ENCODE measurements at regions of chr7 and their contacts with region 1.

Region 1: DNA sequence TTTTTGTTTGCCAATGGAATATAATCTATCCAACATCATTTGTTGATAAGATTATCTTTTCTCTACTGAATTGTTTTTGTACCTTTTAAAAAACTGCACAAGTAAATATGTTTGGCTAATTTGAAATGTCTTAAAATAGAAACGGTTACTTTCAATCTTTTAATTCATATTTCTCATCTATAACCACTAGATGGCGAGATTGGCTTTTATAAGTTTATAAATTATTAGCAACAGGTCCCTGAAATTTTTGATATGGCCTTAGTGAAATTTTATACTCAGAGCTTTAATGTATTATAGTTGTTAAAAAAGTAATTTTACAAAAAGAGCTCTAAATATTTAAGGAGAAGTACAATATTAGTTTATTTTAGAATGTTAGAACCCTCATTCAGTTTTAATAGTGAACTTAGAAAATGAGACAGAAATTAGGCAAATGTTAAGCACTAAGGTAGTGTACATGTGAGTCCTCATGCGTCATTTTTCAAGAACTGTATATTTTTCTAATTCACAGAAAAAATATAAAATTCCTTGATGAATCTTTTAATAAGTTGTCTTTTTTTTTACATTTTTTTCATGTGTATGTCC is 592.5 kb downstream of the ARL4A start:
- DNase-seq: no peak
- H3K4me3 ChIP-seq: no peak overlapping the region
- H3K27ac ChIP-seq: no peak overlapping the region
- H3K4me1 ChIP-seq: no peaks in the 10 kb centered on the region
- H3K27me3 ChIP-seq: no peaks in the 10 kb centered on the region
- CTCF ChIP-seq: peak; percentile 24 to 33

Region 2: GRCh38 chr7:13532028-13532753 is 252.2 kb after region 1 on chr7:
- CTCF ChIA-PET with region 1: no interaction called
- dilution Hi-C with region 1: no loop called
- in situ Hi-C with region 1: no loop called
- intact Hi-C with region 1: loop called (anchors 5 kb)
- DNase-seq: no peak
- H3K4me3 ChIP-seq: no peak overlapping the region
- H3K27ac ChIP-seq: no peak overlapping the region
- H3K4me1 ChIP-seq: no peaks in the 10 kb centered on the region
- H3K27me3 ChIP-seq: no peaks in the 10 kb centered on the region
- CTCF ChIP-seq: no peak

Region 3: GRCh38 chr7:13725591-13725990 is 445.6 kb after region 1 on chr7:
- CTCF ChIA-PET with region 1: no interaction called
- dilution Hi-C with region 1: no loop called
- in situ Hi-C with region 1: loop called in 1 of 2 experiments (anchors 25 kb)
- intact Hi-C with region 1: loop called (anchors 5 kb)
- DNase-seq: no peak
- H3K4me3 ChIP-seq: no peak overlapping the region
- H3K27ac ChIP-seq: no peak overlapping the region
- H3K4me1 ChIP-seq: no peaks in the 10 kb centered on the region
- H3K27me3 ChIP-seq: no peaks in the 10 kb centered on the region
- CTCF ChIP-seq: no peak

Region 4: GRCh38 chr7:13742811-13743210 is 462.9 kb after region 1 on chr7:
- CTCF ChIA-PET with region 1: no interaction called
- dilution Hi-C with region 1: no loop called
- in situ Hi-C with region 1: no loop called
- intact Hi-C with region 1: loop called (anchors 5 kb)
- DNase-seq: peak; percentile 33
- H3K4me3 ChIP-seq: no peak overlapping the region
- H3K27ac ChIP-seq: no peak overlapping the region
- H3K4me1 ChIP-seq: peaks cover 6% of the 10 kb centered on the region
- H3K27me3 ChIP-seq: no peaks in the 10 kb centered on the region
- CTCF ChIP-seq: peak; percentile 39 to 64

Region 5: GRCh38 chr7:14457568-14458453 is 1177.9 kb after region 1 on chr7:
- CTCF ChIA-PET with region 1: no interaction called
- dilution Hi-C with region 1: no loop called
- in situ Hi-C with region 1: loop called (anchors 25 kb)
- intact Hi-C with region 1: loop called (anchors 1 kb)
- DNase-seq: peak; percentile 60
- H3K4me3 ChIP-seq: no peak overlapping the region
- H3K27ac ChIP-seq: no peak overlapping the region
- H3K4me1 ChIP-seq: no peaks in the 10 kb centered on the region
- H3K27me3 ChIP-seq: no peaks in the 10 kb centered on the region
- CTCF ChIP-seq: peak; percentile 71 to 90